OCI-LY7 (cell line): ENCODE measurements at regions of chr7 and their contacts with region 1.

Region 1: DNA sequence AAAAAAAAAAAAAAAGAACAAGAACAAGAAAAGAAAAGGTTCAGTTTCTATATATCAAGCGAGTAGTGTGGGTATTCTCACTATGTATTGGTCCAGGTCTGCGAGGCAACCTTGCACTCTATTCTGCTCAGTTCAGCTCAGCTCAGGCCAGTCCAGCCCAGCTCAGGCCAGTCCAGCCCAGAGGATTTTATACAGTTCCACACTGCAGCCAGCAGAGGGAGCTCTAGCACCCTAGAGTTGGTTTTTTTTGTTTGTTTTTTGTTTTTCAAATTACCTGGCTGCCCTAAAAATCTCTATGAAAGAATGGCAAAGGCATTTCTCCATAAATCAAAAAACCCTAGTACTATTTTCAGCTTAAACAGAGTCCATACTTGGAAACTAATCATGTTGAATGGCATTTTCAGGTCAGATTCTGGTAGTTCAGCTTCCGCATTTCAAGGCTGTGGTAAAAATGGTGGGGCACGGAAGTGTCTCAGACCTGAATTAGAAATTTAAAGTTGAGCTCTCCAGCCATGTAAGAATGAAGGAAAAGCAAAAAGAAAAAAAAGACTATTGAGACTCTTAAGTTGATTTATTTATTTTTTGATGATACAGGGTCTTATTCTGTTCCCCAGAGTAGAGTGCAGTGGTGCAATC is 55.2 kb upstream of the GSDME start:
- DNase-seq: peak; percentile 63
- H3K4me3 ChIP-seq: no peak overlapping the region
- H3K27ac ChIP-seq: no peak overlapping the region
- H3K4me1 ChIP-seq: peaks cover 3% of the 10 kb centered on the region
- CTCF ChIP-seq: peak; percentile 98

Region 2: DNA sequence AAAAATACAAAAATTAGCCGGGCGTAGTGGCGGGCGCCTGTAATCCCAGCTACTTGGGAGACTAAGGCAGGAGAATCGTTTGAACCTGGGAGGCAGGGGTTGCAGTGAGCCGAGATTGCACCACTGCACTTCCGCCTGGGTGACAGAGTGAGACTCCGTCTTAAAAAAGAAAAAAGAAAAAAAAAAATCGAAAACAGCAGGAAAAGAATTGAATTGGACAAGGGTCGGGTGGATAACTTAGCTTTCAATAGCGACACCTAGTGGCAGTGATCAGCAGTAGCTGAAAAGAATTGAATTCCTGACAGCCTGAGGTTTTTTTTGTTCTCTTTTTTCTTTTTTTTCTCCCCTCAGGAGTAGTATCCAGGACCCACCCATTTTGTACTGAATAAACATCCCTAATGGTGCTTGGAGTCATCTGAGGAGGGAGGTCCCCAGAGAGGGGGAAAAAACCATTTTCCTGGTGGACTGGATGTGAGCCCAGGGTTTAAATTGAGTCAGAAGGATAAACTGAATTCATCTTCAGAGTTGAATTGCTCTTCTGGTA is 257.5 kb after region 1 on chr7:
- CTCF ChIA-PET with region 1: interaction called, 3 read pairs
- POLR2A ChIA-PET with region 1: interaction called, 7 read pairs
- intact Hi-C with region 1: loop called (anchors 1 kb)
- DNase-seq: peak; percentile 85
- H3K4me3 ChIP-seq: no peak overlapping the region
- H3K27ac ChIP-seq: no peak overlapping the region
- H3K4me1 ChIP-seq: peaks cover 32% of the 10 kb centered on the region
- CTCF ChIP-seq: peak; percentile 93

Region 3: DNA sequence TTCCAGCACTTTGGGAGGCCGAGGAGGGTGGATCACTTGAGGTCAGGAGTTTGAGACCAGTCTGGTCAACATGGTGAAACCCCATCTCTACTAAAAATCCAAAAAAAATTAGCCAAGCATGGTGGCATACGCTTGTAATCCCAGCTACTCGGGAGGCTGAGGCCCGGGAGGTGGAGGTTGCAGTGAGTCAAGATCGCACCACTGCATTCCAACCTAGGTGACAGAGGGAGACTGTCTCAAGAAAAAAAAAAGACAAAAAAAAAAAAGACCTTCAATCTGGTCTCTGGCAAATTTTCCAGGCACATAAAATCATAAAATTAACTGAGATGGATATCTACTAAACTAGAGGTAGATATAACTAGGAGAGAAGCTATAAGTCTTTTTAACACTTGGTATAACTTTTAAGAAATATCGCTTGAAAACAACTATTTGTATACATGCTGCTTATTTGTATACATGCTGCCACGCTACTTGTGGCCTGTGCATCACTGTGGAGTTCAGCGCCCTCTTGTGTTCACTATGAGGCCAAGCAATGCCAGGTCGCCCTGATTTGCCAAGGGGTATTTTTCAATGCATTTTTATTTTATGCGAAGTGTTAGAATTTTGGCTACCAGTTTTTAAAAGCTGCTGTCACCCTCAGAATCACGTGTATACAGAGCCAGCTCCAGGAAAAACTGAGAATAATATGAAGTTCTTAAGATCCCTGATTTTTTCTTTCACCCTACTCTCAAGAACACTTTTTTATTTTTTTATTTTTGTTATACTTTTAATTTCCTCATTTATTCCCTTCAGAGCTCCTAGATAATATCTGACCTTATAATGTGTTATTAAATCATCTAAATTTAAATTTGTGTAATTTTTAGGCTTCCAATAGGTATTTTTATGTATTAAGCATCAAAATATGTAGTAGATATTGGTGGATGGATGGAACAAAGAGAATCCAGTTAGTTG is 285.9 kb after region 1 on chr7:
- CTCF ChIA-PET with region 1: interaction called, 4 read pairs
- POLR2A ChIA-PET with region 1: interaction called, 3 read pairs
- intact Hi-C with region 1: loop called (anchors 1 kb)
- DNase-seq: peak; percentile 83
- H3K4me3 ChIP-seq: no peak overlapping the region
- H3K27ac ChIP-seq: no peak overlapping the region
- H3K4me1 ChIP-seq: peaks cover 10% of the 10 kb centered on the region
- CTCF ChIP-seq: peak; percentile 99

Region 4: GRCh38 chr7:25408012-25408687 is 595.7 kb after region 1 on chr7:
- CTCF ChIA-PET with region 1: no interaction called
- POLR2A ChIA-PET with region 1: no interaction called
- intact Hi-C with region 1: no loop called
- DNase-seq: no peak
- H3K4me3 ChIP-seq: no peak overlapping the region
- H3K27ac ChIP-seq: no peak overlapping the region
- H3K4me1 ChIP-seq: no peaks in the 10 kb centered on the region
- CTCF ChIP-seq: no peak